ENCODE measurements at regions of chr12 and their contacts with region 1.

Region 1: GRCh38 chr12:25195056-25195971 is at the starts of genes DNAI7 and ETFRF1:
- DNase-seq: peak; percentile 96
- H3K4me3 Mint-ChIP-seq: peak within 1 kb of the TSS; percentile 97
- H3K27ac Mint-ChIP-seq: peak within 1 kb of the TSS; percentile 94
- H3K4me1 Mint-ChIP-seq: peaks cover 28% of the 10 kb centered on the region
- H3K27me3 Mint-ChIP-seq: no peaks in the 10 kb centered on the region
- total RNA-seq, gene DNAI7: not detected
- total RNA-seq, gene ETFRF1: 8.7 to 11.5 TPM

Region 2: DNA sequence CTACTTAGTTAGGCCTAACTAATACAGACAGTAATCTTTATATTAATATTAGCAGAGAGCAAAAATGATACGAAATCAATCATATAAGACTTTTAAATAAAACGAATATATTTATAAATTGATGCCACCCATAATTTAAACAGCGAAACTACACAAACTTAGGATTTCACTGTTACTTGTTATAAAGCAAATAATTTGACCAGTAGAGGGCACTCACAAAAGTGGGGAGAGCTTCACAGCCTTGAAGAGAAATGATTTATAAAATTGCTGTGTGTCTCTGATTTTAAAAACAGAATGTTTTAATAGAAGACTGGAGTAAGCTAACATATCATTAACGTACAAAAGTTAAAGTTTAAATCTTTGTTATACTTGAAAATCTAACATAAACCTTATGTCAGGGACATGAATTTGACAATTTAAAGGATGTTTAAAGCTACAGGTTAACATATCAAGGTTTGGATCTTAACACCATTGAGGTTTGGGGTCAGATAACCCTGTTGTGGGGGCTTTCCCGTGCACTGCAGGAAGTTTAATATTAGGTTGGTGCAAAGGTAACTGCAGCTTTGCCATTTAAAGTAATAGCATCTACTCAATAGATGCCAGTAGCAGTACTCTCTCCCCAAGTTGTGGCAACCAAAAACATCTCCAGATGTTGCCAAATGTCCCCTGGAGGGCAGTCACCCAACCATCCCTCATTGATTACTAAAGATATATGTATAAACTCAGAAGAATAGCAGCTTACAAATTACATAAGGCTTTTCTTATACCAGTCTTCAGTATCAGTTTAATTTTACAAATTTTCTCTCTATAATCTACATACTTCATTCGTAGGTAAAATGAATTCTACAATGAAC is 46.1 kb after region 1 on chr12:
- CTCF ChIA-PET with region 1: no interaction called
- POLR2A ChIA-PET with region 1: interaction called, 14 read pairs
- DNase-seq: peak; percentile 27
- H3K4me3 Mint-ChIP-seq: no peak overlapping the region
- H3K27ac Mint-ChIP-seq: no peak overlapping the region
- H3K4me1 Mint-ChIP-seq: peaks cover 18% of the 10 kb centered on the region
- H3K27me3 Mint-ChIP-seq: no peaks in the 10 kb centered on the region

Measured in activated CD4-positive, alpha-beta T cell treated with anti-CD3 and anti-CD28 coated beads, Interleukin-2, amount 10 ng/mL, durations not matched to agents 7 days and 5 days (primary cell).